ENCODE measurements at regions of chr2 and their contacts with region 1.

Region 1: GRCh38 chr2:205947621-205948495 is 138.1 kb downstream of the INO80D start:
- DNase-seq: peak; percentile 21 to 88
- H3K4me3 ChIP-seq: no peak overlapping the region
- H3K27ac ChIP-seq: no peak overlapping the region
- H3K4me1 ChIP-seq: peaks cover 0 to 3% (median 0%) of the 10 kb centered on the region in 4 experiments; a peak in 1 of 7 replicates
- H3K27me3 ChIP-seq: no peaks in the 10 kb centered on the region
- CTCF ChIP-seq: peak; percentile 83 to 93 (median 90)
- EP300 ChIP-seq: no peak
- POLR2A ChIP-seq: no peak
- RAD21 ChIP-seq: peak; percentile 90 to 94

Region 2: DNA sequence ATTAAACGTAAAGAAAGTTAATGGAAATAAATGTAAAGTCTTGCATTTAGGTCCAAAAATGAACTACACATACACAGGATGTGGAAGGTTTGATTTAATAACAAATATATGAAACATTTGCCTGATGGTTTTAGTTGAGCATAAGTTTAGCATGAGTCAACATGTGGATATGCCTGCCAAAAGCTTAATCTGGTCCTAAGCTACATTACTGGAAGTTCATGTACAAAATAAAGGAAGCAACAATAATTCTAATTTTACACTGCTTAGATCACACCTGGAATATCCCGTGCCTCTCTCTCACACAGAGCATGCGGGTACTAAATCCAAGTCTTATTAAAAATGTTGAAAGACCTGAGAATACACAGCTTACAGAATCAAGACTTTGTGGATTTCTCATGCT is 542.1 kb before region 1 on chr2:
- CTCF ChIA-PET with region 1: no interaction called
- POLR2A ChIA-PET with region 1: no interaction called
- DNase-seq: no peak
- H3K4me3 ChIP-seq: no peak overlapping the region
- H3K27ac ChIP-seq: no peak overlapping the region
- H3K4me1 ChIP-seq: no peaks in the 10 kb centered on the region
- H3K27me3 ChIP-seq: no peaks in the 10 kb centered on the region
- CTCF ChIP-seq: no peak
- EP300 ChIP-seq: no peak
- POLR2A ChIP-seq: no peak
- RAD21 ChIP-seq: no peak

Region 3: DNA sequence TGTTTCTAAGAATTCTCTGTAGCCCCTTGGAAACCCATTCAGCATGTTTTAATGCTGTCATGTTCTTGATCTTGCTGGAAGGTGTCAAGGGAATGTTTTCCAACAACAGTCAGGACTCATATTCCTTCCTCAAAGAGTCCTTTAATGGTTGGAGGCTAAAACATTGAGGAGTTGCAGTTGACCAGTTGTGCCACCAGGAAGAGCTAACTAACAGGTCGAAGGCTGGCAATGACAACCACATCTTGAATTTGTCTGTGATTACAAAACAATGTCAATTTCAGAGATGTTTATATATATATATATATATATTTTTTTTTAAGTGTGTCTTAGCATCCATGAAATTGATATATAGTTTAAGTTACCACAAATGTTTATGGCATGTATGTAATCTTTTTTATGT is 13.4 kb before region 1 on chr2:
- CTCF ChIA-PET with region 1: interaction called, 98 read pairs
- POLR2A ChIA-PET with region 1: interaction called, 3 read pairs
- DNase-seq: no peak
- H3K4me3 ChIP-seq: no peak overlapping the region
- H3K27ac ChIP-seq: no peak overlapping the region
- H3K4me1 ChIP-seq: peaks cover 0 to 9% (median 2%) of the 10 kb centered on the region in 4 experiments; a peak in 4 of 7 replicates
- H3K27me3 ChIP-seq: no peaks in the 10 kb centered on the region
- CTCF ChIP-seq: peak in 2 of 3 experiments; percentile 36 to 52; a peak in 2 of 4 replicates
- EP300 ChIP-seq: no peak
- POLR2A ChIP-seq: no peak
- RAD21 ChIP-seq: peak; percentile 50 to 51

Region 4: DNA sequence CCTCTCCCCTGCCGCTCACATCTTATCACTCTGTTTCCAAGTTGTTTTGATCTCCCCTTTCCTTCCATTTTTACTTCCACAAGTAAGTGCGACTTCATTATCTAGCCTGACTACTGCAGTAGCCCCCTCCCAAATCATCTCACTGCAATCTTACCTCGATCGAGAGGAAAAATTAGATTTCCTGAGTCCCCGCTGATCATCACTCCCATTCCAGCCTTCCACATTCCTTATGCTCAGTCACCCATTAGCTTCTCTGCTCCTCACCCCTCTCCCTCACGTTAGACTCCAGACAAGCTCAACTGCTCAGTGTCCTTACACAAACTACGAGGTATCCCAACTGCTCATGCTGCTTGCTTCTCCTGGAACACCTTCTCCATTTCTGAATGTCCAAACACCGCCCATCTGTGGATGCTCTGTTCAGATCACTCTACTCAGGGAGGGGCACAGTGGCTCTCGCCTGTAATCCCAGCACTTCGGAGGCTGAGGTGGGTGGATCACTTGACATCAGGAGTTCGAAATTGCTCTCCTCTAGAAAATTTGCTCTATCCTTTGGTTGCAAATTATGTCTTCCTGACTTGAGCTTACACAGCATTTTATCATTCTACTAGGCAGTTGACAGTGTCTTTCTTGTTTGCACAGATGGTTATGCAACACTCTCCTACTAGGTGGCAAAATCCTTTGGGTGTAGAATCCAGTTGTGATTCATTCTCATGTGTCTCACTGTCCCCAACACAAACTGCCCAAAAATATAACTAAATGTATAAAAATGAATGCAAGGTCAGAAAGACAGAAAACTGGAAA is 41.6 kb after region 1 on chr2:
- CTCF ChIA-PET with region 1: no interaction called
- POLR2A ChIA-PET with region 1: no interaction called
- DNase-seq: peak in 1 of 2 experiments; percentile 43
- H3K4me3 ChIP-seq: no peak overlapping the region
- H3K27ac ChIP-seq: no peak overlapping the region; the same call in 1 of the 2 replicates
- H3K4me1 ChIP-seq: no peaks in the 10 kb centered on the region
- H3K27me3 ChIP-seq: no peaks in the 10 kb centered on the region
- CTCF ChIP-seq: no peak
- EP300 ChIP-seq: no peak
- POLR2A ChIP-seq: no peak
- RAD21 ChIP-seq: no peak

Region 5: DNA sequence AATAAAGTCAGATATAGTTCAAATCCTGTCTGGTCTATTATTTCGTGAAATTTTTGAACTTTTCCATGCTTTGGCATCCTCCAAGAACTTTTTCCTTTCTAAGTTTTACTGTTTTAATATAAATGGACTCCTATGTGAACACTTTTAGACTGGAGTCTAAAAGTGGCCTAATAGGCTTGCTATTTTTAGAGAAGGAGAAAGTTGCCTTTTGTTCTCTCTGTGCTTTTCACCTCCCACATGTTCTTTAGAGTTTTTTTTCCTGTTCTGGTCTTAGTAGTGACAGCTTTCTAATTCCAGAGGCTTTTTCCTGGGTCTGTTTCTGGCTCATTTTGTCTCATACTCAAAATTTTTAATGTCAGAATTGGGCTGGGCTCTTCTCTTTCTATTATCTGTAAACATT is 567.7 kb after region 1 on chr2:
- CTCF ChIA-PET with region 1: no interaction called
- POLR2A ChIA-PET with region 1: no interaction called
- DNase-seq: no peak
- H3K4me3 ChIP-seq: no peak overlapping the region
- H3K27ac ChIP-seq: no peak overlapping the region
- H3K4me1 ChIP-seq: peaks cover 0 to 3% (median 2%) of the 10 kb centered on the region in 4 experiments; a peak in 3 of 7 replicates
- H3K27me3 ChIP-seq: no peaks in the 10 kb centered on the region
- CTCF ChIP-seq: no peak
- EP300 ChIP-seq: no peak
- POLR2A ChIP-seq: no peak
- RAD21 ChIP-seq: no peak